Naive thymus-derived CD4-positive, alpha-beta T cell (primary cell): ENCODE measurements at regions of chr1 and their contacts with region 1.

Region 1: GRCh38 chr1:84077476-84078107 is 66.5 kb upstream of the PRKACB start:
- DNase-seq: peak; percentile 64 to 79 (median 72)
- ATAC-seq: peak; percentile 97
- H3K4me3 ChIP-seq: peak overlapping the region; percentile 79
- H3K4me3 Mint-ChIP-seq: peak overlapping the region; percentile 84 to 93 (median 90)
- H3K27ac ChIP-seq: peak overlapping the region; percentile 66
- H3K27ac Mint-ChIP-seq: peak overlapping the region; percentile 23 to 87 (median 75)
- H3K4me1 ChIP-seq: peaks cover 9 to 10% of the 10 kb centered on the region in 2 donors
- H3K4me1 Mint-ChIP-seq: peaks cover 6 to 23% (median 14%) of the 10 kb centered on the region in 7 donors
- H3K27me3 ChIP-seq: no peaks in the 10 kb centered on the region
- H3K27me3 Mint-ChIP-seq: peaks cover 0 to 35% (median 0%) of the 10 kb centered on the region in 5 donors

Region 2: GRCh38 chr1:83508485-83509151 is 569.0 kb before region 1 on chr1:
- CTCF ChIA-PET with region 1: no interaction called
- POLR2A ChIA-PET with region 1: no interaction called
- intact Hi-C with region 1: loop called in 1 of 2 experiments (anchors 5 kb)
- DNase-seq: peak in 8 of 9 donors; percentile 27 to 89 (median 84)
- ATAC-seq: peak; percentile 96
- H3K4me3 ChIP-seq: peak overlapping the region; percentile 7
- H3K4me3 Mint-ChIP-seq: peak overlapping the region; percentile 56 to 96 (median 74)
- H3K27ac ChIP-seq: peak overlapping the region; percentile 76
- H3K27ac Mint-ChIP-seq: peak overlapping the region; percentile 89 to 99 (median 95)
- H3K4me1 ChIP-seq: peaks cover 6 to 36% of the 10 kb centered on the region in 2 donors
- H3K4me1 Mint-ChIP-seq: peaks cover 17 to 78% (median 64%) of the 10 kb centered on the region in 7 donors
- H3K27me3 ChIP-seq: no peaks in the 10 kb centered on the region
- H3K27me3 Mint-ChIP-seq: no peaks in the 10 kb centered on the region

Region 3: GRCh38 chr1:83998498-83999315 is 78.9 kb before region 1 on chr1 and contains the start of gene TTLL7:
- CTCF ChIA-PET with region 1: no interaction called
- POLR2A ChIA-PET with region 1: no interaction called
- intact Hi-C with region 1: loop called (anchors 2 to 5 kb)
- DNase-seq: peak; percentile 10 to 75 (median 23)
- ATAC-seq: peak; percentile 81
- H3K4me3 ChIP-seq: peak within 1 kb of the TSS; percentile 53
- H3K4me3 Mint-ChIP-seq: peak within 1 kb of the TSS; percentile 74 to 92 (median 85)
- H3K27ac ChIP-seq: no peak within 1 kb of the TSS
- H3K27ac Mint-ChIP-seq: peak within 1 kb of the TSS in 2 of 9 donors; percentile 56 to 58
- H3K4me1 ChIP-seq: peaks cover 6 to 7% of the 10 kb centered on the region in 2 donors
- H3K4me1 Mint-ChIP-seq: peaks cover 9 to 20% (median 17%) of the 10 kb centered on the region in 7 donors
- H3K27me3 ChIP-seq: peaks cover 4 to 13% of the 10 kb centered on the region in 2 donors
- H3K27me3 Mint-ChIP-seq: peaks cover 61 to 78% (median 68%) of the 10 kb centered on the region in 5 donors
- total RNA-seq, gene TTLL7: 0.27 to 2.1 (median 1.1) TPM in 3 of 5 experiments, not detected in the others

Region 4: GRCh38 chr1:84048820-84049219 is 28.8 kb before region 1 on chr1:
- CTCF ChIA-PET with region 1: no interaction called
- POLR2A ChIA-PET with region 1: no interaction called
- intact Hi-C with region 1: no loop called
- DNase-seq: no peak
- ATAC-seq: no peak
- H3K4me3 ChIP-seq: no peak overlapping the region
- H3K4me3 Mint-ChIP-seq: no peak overlapping the region
- H3K27ac ChIP-seq: no peak overlapping the region
- H3K27ac Mint-ChIP-seq: no peak overlapping the region
- H3K4me1 ChIP-seq: no peaks in the 10 kb centered on the region
- H3K4me1 Mint-ChIP-seq: peaks cover 0 to 2% (median 0%) of the 10 kb centered on the region in 7 donors
- H3K27me3 ChIP-seq: no peaks in the 10 kb centered on the region
- H3K27me3 Mint-ChIP-seq: peaks cover 0 to 2% (median 0%) of the 10 kb centered on the region in 5 donors

Region 5: GRCh38 chr1:84122780-84123382 is 45.3 kb after region 1 on chr1:
- CTCF ChIA-PET with region 1: interaction called, 3 read pairs
- POLR2A ChIA-PET with region 1: no interaction called
- intact Hi-C with region 1: loop called in 1 of 2 experiments (anchors 5 kb)
- DNase-seq: peak in 7 of 9 donors; percentile 20 to 58 (median 44)
- ATAC-seq: peak; percentile 78
- H3K4me3 ChIP-seq: no peak overlapping the region
- H3K4me3 Mint-ChIP-seq: no peak overlapping the region
- H3K27ac ChIP-seq: no peak overlapping the region
- H3K27ac Mint-ChIP-seq: no peak overlapping the region
- H3K4me1 ChIP-seq: no peaks in the 10 kb centered on the region
- H3K4me1 Mint-ChIP-seq: no peaks in the 10 kb centered on the region
- H3K27me3 ChIP-seq: no peaks in the 10 kb centered on the region
- H3K27me3 Mint-ChIP-seq: peaks cover 0 to 10% (median 0%) of the 10 kb centered on the region in 5 donors

Region 6: DNA sequence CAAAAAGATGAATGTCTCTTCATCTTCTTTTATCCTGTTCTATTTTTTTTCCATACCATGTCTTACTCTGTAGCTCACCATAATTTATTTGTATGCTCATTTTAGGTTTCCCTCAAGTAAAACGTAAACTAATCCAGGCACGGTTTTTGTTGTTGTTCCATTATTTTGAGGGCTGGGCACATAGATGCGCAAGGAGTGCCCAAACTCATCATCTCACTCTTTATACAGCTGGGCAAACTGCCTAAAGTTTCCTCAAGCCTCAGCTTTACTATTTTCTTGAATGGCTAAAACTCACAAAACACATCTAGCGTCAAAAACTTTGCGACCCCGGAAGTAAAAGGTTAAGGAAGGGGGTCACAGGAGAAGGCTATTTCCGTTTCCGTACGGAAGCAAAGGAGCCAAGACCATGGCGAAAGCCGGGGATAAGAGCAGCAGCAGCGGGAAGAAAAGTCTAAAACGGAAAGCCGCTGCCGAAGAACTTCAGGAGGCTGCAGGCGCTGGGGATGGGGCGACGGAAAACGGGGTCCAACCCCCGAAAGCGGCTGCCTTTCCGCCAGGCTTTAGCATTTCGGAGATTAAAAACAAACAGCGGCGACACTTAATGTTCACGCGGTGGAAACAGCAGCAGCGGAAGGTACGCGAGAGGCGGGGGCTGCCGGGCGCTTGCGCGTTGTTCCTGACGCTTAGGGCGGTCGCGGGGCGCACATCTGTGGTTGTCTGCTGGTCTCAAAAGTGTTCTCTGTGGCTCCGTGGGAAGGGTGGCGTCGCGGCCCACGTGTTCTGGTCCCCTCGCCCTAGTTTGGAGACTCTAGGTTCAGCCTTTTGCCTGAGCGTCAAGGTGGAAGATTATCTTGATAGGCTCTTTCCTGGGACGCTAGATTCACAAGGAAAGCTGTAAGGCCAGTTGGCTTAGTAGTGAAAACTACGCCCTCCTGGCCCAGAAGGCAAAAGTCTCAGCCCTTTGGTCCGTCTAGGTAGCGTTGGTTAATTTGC is 401.6 kb after region 1 on chr1 and contains the start of gene RPF1:
- CTCF ChIA-PET with region 1: no interaction called
- POLR2A ChIA-PET with region 1: no interaction called
- intact Hi-C with region 1: loop called in 1 of 2 experiments (anchors 1 kb)
- DNase-seq: peak; percentile 61 to 88 (median 83)
- ATAC-seq: peak; percentile 97
- H3K4me3 ChIP-seq: peak within 1 kb of the TSS; percentile 72
- H3K4me3 Mint-ChIP-seq: peak within 1 kb of the TSS; percentile 88 to 100 (median 98)
- H3K27ac ChIP-seq: peak within 1 kb of the TSS; percentile 80
- H3K27ac Mint-ChIP-seq: peak within 1 kb of the TSS; percentile 98 to 100 (median 99)
- H3K4me1 ChIP-seq: peaks cover 22 to 28% of the 10 kb centered on the region in 2 donors
- H3K4me1 Mint-ChIP-seq: peaks cover 29 to 60% (median 49%) of the 10 kb centered on the region in 7 donors
- H3K27me3 ChIP-seq: peaks cover 0 to 7% of the 10 kb centered on the region in 2 donors
- H3K27me3 Mint-ChIP-seq: peaks cover 21 to 35% (median 26%) of the 10 kb centered on the region in 5 donors
- total RNA-seq, gene RPF1: 35.5 to 52.3 (median 44.1) TPM

Region 7: DNA sequence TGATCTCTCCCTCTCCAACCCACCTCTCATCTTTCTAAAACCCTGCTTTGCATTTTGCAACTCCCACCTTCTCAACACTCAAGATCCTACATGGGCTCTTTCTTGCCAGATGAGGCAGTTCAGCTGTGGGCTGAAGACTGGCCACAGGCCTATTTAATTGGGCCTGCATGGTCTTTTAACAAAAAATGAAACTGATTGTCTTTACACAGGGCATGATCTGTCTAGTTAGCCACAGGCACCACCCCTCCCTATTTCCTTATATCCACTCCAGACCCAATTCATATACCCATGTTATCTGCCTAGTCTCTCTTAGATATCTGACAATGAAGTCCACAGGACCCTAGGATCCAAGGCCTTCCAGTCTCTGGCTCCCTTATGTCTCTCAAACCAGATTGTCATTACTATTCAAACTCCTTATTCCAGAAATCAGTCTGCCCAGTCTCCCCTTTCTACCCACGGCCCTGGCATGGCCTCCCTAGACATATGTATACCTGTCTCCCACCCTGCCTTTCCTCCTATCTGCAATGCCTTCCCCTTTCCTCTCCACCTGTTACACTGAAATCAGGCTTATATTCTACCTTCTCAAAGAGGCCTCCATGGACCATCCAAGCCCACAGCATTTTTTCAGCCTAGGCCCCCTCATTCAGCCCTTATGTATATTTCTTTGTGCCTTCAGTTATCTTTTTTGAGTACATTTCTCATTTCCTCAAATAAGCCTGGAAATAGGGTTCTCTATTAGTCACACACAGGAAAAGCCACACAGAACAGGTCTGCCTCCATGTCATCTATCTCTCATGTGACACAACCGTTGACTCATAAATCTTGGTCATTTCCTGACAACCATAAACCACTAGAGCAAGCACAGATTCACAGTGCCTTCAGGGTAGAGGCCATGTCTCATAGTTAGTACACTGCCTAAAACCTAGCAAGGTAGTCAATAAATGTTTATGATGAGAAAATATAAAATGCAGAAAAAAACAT is 776.4 kb after region 1 on chr1:
- CTCF ChIA-PET with region 1: no interaction called
- POLR2A ChIA-PET with region 1: no interaction called
- intact Hi-C with region 1: loop called in 1 of 2 experiments (anchors 5 kb)
- DNase-seq: peak in 8 of 9 donors; percentile 16 to 56 (median 41)
- ATAC-seq: peak; percentile 96
- H3K4me3 ChIP-seq: no peak overlapping the region
- H3K4me3 Mint-ChIP-seq: peak overlapping the region in 6 of 10 donors; percentile 0 to 70 (median 14)
- H3K27ac ChIP-seq: peak overlapping the region; percentile 5
- H3K27ac Mint-ChIP-seq: peak overlapping the region; percentile 54 to 98 (median 87)
- H3K4me1 ChIP-seq: peaks cover 14 to 17% of the 10 kb centered on the region in 2 donors
- H3K4me1 Mint-ChIP-seq: peaks cover 23 to 52% (median 45%) of the 10 kb centered on the region in 7 donors
- H3K27me3 ChIP-seq: no peaks in the 10 kb centered on the region
- H3K27me3 Mint-ChIP-seq: peaks cover 0 to 8% (median 0%) of the 10 kb centered on the region in 5 donors